Naive thymus-derived CD4-positive, alpha-beta T cell (primary cell): ENCODE measurements at regions of chr11 and their contacts with region 1.

Region 1: DNA sequence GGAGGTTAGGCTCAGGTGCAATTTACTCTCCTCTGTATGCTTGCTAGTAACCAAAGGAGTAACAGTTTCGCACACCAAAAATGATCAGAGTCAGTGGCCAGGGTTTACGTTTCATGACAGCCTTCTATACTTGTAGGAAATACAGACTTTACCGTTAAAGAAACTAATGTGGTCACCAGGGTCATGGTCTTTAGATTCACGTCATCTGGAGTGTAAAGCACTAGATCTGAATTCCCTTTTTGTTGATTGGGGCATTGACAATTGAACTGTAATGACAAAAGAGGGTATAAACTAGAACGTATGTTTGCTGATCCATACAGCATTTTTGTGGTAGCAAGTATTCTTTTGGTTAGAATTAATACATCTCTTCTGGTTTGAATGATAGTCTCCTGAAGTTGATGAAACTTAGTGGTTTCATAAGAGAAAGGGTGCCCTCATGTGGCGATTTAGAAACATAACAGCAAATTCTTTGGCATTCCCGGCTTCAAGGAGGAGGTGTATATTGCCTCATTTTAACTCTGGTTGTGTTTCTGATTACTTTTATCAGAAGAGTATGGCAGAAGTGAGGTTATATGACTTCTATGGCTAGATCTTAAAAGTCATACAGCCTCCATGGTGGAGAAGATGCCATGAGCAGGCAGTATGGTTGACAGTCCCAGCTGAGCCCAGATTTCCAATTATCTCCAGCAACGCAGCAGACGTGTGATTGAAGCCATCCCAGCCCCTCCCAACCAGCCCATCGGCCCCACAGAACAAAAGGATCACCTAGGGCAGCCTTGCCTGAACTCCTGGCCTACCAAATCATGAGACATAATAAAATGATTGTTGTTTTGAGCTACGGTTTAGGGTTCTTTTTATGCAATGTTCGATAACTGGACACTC is 35.1 kb downstream of the MMP7 start:
- DNase-seq: peak in 7 of 9 donors; percentile 54 to 79 (median 71)
- ATAC-seq: peak; percentile 91
- H3K4me3 ChIP-seq: no peak overlapping the region
- H3K4me3 Mint-ChIP-seq: peak overlapping the region in 1 of 10 donors; percentile 18
- H3K27ac ChIP-seq: no peak overlapping the region
- H3K27ac Mint-ChIP-seq: peak overlapping the region in 4 of 9 donors; percentile 2 to 40 (median 12)
- H3K4me1 ChIP-seq: no peaks in the 10 kb centered on the region
- H3K4me1 Mint-ChIP-seq: peaks cover 4 to 26% (median 10%) of the 10 kb centered on the region in 7 donors
- H3K27me3 ChIP-seq: no peaks in the 10 kb centered on the region
- H3K27me3 Mint-ChIP-seq: peaks cover 0 to 22% (median 0%) of the 10 kb centered on the region in 5 donors

Region 2: GRCh38 chr11:102367364-102367763 is 128.0 kb before region 1 on chr11:
- CTCF ChIA-PET with region 1: interaction called, 36 read pairs
- POLR2A ChIA-PET with region 1: no interaction called
- intact Hi-C with region 1: loop called (anchors 1 kb)
- DNase-seq: peak in 6 of 9 donors; percentile 33 to 65 (median 56)
- ATAC-seq: peak; percentile 77
- H3K4me3 ChIP-seq: no peak overlapping the region
- H3K4me3 Mint-ChIP-seq: peak overlapping the region in 3 of 10 donors; percentile 4 to 28 (median 19)
- H3K27ac ChIP-seq: no peak overlapping the region
- H3K27ac Mint-ChIP-seq: peak overlapping the region; percentile 16 to 93 (median 83)
- H3K4me1 ChIP-seq: peaks cover 0 to 12% of the 10 kb centered on the region in 2 donors
- H3K4me1 Mint-ChIP-seq: peaks cover 9 to 48% (median 33%) of the 10 kb centered on the region in 7 donors
- H3K27me3 ChIP-seq: no peaks in the 10 kb centered on the region
- H3K27me3 Mint-ChIP-seq: no peaks in the 10 kb centered on the region

Region 3: GRCh38 chr11:102415304-102415916 is 80.0 kb before region 1 on chr11:
- CTCF ChIA-PET with region 1: interaction called, 3 read pairs
- POLR2A ChIA-PET with region 1: no interaction called
- intact Hi-C with region 1: loop called in 1 of 2 experiments (anchors 1 kb)
- DNase-seq: peak in 3 of 9 donors; percentile 26 to 45 (median 39)
- ATAC-seq: peak; percentile 59
- H3K4me3 ChIP-seq: peak overlapping the region; percentile 34
- H3K4me3 Mint-ChIP-seq: peak overlapping the region; percentile 35 to 89 (median 80)
- H3K27ac ChIP-seq: peak overlapping the region; percentile 37
- H3K27ac Mint-ChIP-seq: peak overlapping the region; percentile 63 to 97 (median 89)
- H3K4me1 ChIP-seq: peaks cover 30 to 70% of the 10 kb centered on the region in 2 donors
- H3K4me1 Mint-ChIP-seq: peaks cover 67 to 100% (median 96%) of the 10 kb centered on the region in 7 donors
- H3K27me3 ChIP-seq: no peaks in the 10 kb centered on the region
- H3K27me3 Mint-ChIP-seq: no peaks in the 10 kb centered on the region